Calu3 (cell line): ENCODE measurements at regions of chr16 and their contacts with region 1.

Region 1: GRCh38 chr16:72927199-72928089 is 120.5 kb downstream of the ZFHX3 start:
- DNase-seq: peak; percentile 83
- H3K4me3 Mint-ChIP-seq: peak overlapping the region; percentile 34
- H3K27ac Mint-ChIP-seq: peak overlapping the region; percentile 22
- H3K4me1 Mint-ChIP-seq: peaks cover 82% of the 10 kb centered on the region
- H3K27me3 Mint-ChIP-seq: no peaks in the 10 kb centered on the region
- CTCF ChIP-seq: no peak

Region 2: DNA sequence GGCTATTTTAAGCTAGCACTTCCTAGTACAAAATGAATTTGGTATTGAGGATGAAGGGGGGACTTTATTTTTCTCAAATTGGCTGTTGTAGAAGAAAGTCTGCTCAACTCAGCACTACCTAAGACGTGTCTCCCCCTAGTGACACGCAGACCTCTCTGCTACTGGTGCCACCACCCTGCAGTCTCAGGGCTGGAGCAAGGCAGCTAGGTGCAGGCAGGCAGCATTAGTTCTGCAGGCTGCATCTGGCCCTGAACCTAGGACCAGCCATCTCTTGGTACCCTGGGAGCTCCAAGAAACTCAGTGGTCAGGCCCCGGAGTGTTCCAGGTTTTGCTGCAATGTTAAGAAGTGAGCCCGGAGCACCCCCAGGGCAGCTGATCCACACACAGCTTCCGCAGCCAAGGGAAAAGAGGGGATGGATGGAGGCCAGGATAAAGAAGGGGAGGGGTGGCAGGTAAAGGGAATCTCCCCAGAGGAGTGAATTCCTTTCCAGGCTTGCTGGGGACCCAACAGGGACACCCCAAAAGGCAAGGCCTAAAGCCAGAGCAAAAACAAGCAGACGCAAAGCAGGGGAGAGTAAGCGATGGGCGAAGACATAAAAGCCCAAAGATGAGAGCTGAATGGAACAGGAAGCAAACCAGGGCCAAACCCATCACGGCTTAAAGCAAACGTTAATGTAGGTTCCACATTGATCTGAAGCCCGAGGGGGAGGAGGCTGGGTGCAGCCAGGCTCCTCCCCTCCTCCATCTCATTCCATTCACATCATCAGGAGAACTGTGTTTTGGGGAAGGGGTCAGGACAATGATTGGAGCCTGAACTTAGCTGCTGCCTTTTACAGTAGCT is 80.0 kb before region 1 on chr16:
- CTCF ChIA-PET with region 1: interaction called, 3 read pairs
- intact Hi-C with region 1: loop called (anchors 5 kb)
- DNase-seq: peak; percentile 60
- H3K4me3 Mint-ChIP-seq: no peak overlapping the region
- H3K27ac Mint-ChIP-seq: no peak overlapping the region
- H3K4me1 Mint-ChIP-seq: peaks cover 42% of the 10 kb centered on the region
- H3K27me3 Mint-ChIP-seq: no peaks in the 10 kb centered on the region
- CTCF ChIP-seq: peak; percentile 31

Region 3: GRCh38 chr16:72877374-72878028 is 49.9 kb before region 1 on chr16:
- CTCF ChIA-PET with region 1: interaction called, 3 read pairs
- intact Hi-C with region 1: loop called (anchors 1 kb)
- DNase-seq: peak; percentile 64
- H3K4me3 Mint-ChIP-seq: no peak overlapping the region
- H3K27ac Mint-ChIP-seq: peak overlapping the region; percentile 77
- H3K4me1 Mint-ChIP-seq: peaks cover 29% of the 10 kb centered on the region
- H3K27me3 Mint-ChIP-seq: no peaks in the 10 kb centered on the region
- CTCF ChIP-seq: no peak

Region 4: GRCh38 chr16:72942021-72942420 is 14.6 kb after region 1 on chr16:
- CTCF ChIA-PET with region 1: no interaction called
- intact Hi-C with region 1: loop called (anchors 1 kb)
- DNase-seq: peak; percentile 48
- H3K4me3 Mint-ChIP-seq: peak overlapping the region; percentile 49
- H3K27ac Mint-ChIP-seq: peak overlapping the region; percentile 82
- H3K4me1 Mint-ChIP-seq: peaks cover 51% of the 10 kb centered on the region
- H3K27me3 Mint-ChIP-seq: no peaks in the 10 kb centered on the region
- CTCF ChIP-seq: no peak

Region 5: GRCh38 chr16:72995151-72995881 is 67.9 kb after region 1 on chr16:
- CTCF ChIA-PET with region 1: interaction called, 4 read pairs
- intact Hi-C with region 1: loop called (anchors 5 kb)
- DNase-seq: peak; percentile 18
- H3K4me3 Mint-ChIP-seq: no peak overlapping the region
- H3K27ac Mint-ChIP-seq: no peak overlapping the region
- H3K4me1 Mint-ChIP-seq: peaks cover 64% of the 10 kb centered on the region
- H3K27me3 Mint-ChIP-seq: no peaks in the 10 kb centered on the region
- CTCF ChIP-seq: peak; percentile 64

Region 6: DNA sequence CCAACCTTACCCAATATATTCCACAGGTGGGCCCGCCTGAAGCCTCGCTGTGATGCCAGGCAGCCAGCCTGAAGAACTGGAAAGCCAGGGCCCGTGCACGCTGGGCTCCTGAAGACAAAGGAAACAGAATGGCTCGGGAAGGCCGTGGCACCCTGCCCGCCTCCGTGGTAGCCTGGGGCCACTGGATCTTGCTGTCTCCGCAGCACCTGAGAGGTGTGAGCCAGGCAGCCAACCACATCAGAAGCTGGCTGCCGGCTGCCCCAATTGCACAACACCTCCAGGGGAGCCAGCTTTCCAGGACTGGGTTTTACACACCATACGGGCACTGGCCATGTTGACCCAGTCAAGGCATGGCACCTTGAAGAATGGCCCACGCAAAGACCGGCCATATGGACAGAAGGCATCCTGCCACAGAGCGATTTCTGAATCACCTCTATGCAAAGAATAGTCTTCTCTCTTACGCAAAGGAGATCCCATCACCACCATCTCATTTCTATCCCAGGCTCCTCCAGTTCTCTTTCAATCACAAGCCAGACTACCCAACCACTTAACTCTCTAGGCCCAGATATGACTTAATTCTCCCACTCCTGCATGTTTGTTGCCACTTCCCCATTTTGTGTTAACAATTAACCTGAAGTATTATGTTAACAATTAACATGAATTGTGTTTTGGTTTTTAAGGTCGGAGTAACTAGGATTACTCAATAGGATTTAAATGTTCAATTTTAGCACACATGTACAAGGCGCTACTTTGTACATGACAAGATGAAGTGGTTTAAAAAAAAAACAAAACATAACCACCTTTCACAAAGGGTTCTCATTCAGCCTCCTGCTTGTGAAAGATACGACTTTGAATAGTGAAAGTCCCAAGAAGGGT is 88.4 kb after region 1 on chr16:
- CTCF ChIA-PET with region 1: no interaction called
- intact Hi-C with region 1: loop called (anchors 5 kb)
- DNase-seq: peak; percentile 82
- H3K4me3 Mint-ChIP-seq: peak overlapping the region; percentile 53
- H3K27ac Mint-ChIP-seq: peak overlapping the region; percentile 76
- H3K4me1 Mint-ChIP-seq: peaks cover 49% of the 10 kb centered on the region
- H3K27me3 Mint-ChIP-seq: no peaks in the 10 kb centered on the region
- CTCF ChIP-seq: no peak